ENCODE measurements at regions of chr6 and their contacts with region 1.

Region 1: DNA sequence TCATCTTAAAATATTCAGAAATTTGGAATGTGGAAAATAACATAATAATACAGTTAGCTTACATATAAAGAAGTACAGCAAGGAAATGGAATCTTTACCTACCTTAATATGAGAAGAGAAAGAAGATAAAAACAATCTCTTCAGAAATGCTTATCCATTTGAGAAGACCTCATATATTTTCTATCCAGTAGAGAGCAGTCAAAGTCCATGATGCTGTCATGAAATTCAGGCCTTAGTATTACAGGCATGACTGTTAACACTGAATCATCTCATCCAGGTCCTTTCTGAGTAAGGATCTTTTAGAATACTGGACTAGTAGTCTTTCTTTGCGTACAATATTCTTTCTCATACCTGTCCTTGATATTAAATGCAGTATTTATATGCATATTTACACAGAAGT is 713.4 kb downstream of the CD109 start:
- DNase-seq: no peak
- H3K4me3 ChIP-seq: no peak overlapping the region
- H3K27ac ChIP-seq: no peak overlapping the region
- H3K4me1 ChIP-seq: no peaks in the 10 kb centered on the region
- H3K27me3 ChIP-seq: no peaks in the 10 kb centered on the region
- CTCF ChIP-seq: peak; percentile 10 to 52 (median 26)
- EP300 ChIP-seq: no peak
- POLR2A ChIP-seq: no peak

Region 2: GRCh38 chr6:73747289-73747688 is 662.2 kb before region 1 on chr6:
- intact Hi-C with region 1: loop called (anchors 10 kb)
- DNase-seq: no peak
- H3K4me3 ChIP-seq: no peak overlapping the region
- H3K27ac ChIP-seq: peak overlapping the region in 1 of 4 donors; percentile 37
- H3K4me1 ChIP-seq: peaks cover 0 to 58% (median 35%) of the 10 kb centered on the region in 4 donors
- H3K27me3 ChIP-seq: no peaks in the 10 kb centered on the region
- CTCF ChIP-seq: no peak
- EP300 ChIP-seq: no peak
- POLR2A ChIP-seq: no peak

Region 3: GRCh38 chr6:73854998-73855718 is 554.3 kb before region 1 on chr6:
- intact Hi-C with region 1: loop called (anchors 10 kb)
- DNase-seq: no peak
- H3K4me3 ChIP-seq: peak overlapping the region; percentile 3 to 27 (median 12)
- H3K27ac ChIP-seq: peak overlapping the region in 3 of 4 donors; percentile 45 to 62 (median 57)
- H3K4me1 ChIP-seq: peaks cover 0 to 9% (median 5%) of the 10 kb centered on the region in 4 donors
- H3K27me3 ChIP-seq: no peaks in the 10 kb centered on the region
- CTCF ChIP-seq: peak; percentile 54 to 80 (median 59)
- EP300 ChIP-seq: no peak
- POLR2A ChIP-seq: no peak

Region 4: GRCh38 chr6:75098709-75099108 is 689.3 kb after region 1 on chr6:
- intact Hi-C with region 1: loop called (anchors 10 kb)
- DNase-seq: peak; percentile 91
- H3K4me3 ChIP-seq: no peak overlapping the region
- H3K27ac ChIP-seq: peak overlapping the region; percentile 67 to 82 (median 81)
- H3K4me1 ChIP-seq: peaks cover 0 to 44% (median 29%) of the 10 kb centered on the region in 4 donors
- H3K27me3 ChIP-seq: no peaks in the 10 kb centered on the region
- CTCF ChIP-seq: no peak
- EP300 ChIP-seq: no peak
- POLR2A ChIP-seq: no peak